Activated naive CD4-positive, alpha-beta T cell treated with anti-CD3 and anti-CD28 coated beads for 36 hours (primary cell): ENCODE measurements at regions of chr16 and their contacts with region 1.

Region 1: DNA sequence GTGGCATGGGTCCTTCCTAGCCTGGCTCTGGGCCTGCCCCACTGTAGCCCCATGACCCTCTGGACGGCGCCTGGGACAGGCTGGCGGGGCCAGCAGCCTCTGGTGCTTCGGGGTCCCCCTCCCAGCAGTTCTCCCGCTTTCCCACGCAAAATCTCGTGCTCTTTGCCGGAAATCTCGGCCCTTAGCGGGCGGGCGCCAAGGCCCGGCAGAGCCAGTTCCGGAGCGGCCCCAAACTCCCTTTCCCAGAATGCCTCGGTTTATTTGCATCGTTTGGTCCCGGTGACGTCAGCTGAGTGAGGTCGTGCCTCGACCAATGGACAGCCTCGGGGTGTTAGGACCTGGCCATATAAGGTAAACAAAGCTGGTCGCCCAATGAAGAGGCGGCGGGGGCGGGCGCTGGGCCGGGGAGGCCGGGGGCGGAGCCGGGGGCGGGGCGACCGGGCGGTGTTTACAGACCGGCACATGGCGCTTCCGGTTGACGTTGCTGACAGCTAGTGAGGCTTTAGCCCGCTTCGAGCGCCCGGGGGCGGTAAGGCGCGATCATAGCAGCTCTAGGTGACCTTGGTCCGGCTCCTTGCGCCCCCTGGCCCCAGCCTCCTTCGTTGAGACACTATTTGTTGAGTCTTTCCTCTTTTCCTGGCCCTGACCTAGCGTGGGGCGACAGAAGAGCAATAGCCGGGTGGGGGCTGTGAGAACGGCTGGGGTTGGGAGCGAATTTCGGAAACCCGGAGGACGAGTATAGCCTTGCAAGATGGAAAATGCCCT is 1.5 kb upstream of the UBALD1 start:
- DNase-seq: peak; percentile 100
- H3K4me3 Mint-ChIP-seq: peak overlapping the region; percentile 89
- H3K27ac Mint-ChIP-seq: peak overlapping the region; percentile 93
- H3K4me1 Mint-ChIP-seq: peaks cover 23% of the 10 kb centered on the region
- H3K27me3 Mint-ChIP-seq: no peaks in the 10 kb centered on the region

Region 2: GRCh38 chr16:4271176-4272066 is 344.8 kb before region 1 on chr16:
- CTCF ChIA-PET with region 1: no interaction called
- intact Hi-C with region 1: loop called (anchors 1 kb)
- DNase-seq: peak; percentile 95
- H3K4me3 Mint-ChIP-seq: peak overlapping the region; percentile 86
- H3K27ac Mint-ChIP-seq: peak overlapping the region; percentile 94
- H3K4me1 Mint-ChIP-seq: peaks cover 12% of the 10 kb centered on the region
- H3K27me3 Mint-ChIP-seq: no peaks in the 10 kb centered on the region

Region 3: GRCh38 chr16:4416200-4417032 is 199.8 kb before region 1 on chr16 and contains the start of gene CORO7:
- CTCF ChIA-PET with region 1: no interaction called
- intact Hi-C with region 1: loop called (anchors 1 kb)
- DNase-seq: peak; percentile 95
- H3K4me3 Mint-ChIP-seq: peak within 1 kb of the TSS; percentile 89
- H3K27ac Mint-ChIP-seq: peak within 1 kb of the TSS; percentile 89
- H3K4me1 Mint-ChIP-seq: peaks cover 33% of the 10 kb centered on the region
- H3K27me3 Mint-ChIP-seq: no peaks in the 10 kb centered on the region
- total RNA-seq, gene CORO7: 39.7 to 43.3 TPM

Region 4: DNA sequence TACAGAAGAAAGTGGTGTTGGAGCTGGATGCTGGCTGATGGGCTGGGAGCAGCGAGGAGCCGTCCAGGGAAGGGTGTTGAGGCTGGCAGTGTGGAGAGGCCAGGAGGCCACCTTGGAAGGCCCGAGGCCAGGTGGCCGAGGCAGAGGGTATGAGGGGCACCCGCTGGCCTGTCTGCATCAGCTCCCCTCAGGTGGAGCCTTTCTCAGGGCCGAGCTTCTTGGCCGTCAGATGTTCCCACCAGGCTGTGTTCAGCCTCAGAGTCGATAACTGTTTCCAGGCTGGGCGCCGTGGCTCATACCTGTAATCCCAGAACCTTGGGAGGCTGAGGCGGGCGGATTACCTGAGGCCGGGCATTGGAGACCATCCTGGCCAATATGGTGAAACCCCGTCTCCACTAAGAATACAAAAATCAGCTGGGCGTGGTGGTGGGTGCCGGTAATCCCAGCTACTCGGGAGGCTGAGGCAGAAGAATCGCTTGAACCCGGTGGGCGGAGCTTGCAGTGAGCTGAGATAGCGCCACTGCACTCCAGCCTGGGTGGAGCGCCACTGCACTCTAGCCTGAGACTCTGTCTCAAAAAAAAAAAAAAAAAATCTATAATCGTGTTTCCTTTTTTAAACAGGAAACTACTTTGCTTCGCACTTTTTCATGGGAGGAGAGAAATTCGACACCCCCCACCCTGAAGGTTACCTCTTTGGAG is 33.7 kb after region 1 on chr16:
- CTCF ChIA-PET with region 1: interaction called, 5 read pairs
- intact Hi-C with region 1: loop called (anchors 2 kb)
- DNase-seq: peak; percentile 34
- H3K4me3 Mint-ChIP-seq: no peak overlapping the region
- H3K27ac Mint-ChIP-seq: no peak overlapping the region
- H3K4me1 Mint-ChIP-seq: peaks cover 45% of the 10 kb centered on the region
- H3K27me3 Mint-ChIP-seq: no peaks in the 10 kb centered on the region

Region 5: GRCh38 chr16:4734063-4734729 is 118.0 kb after region 1 on chr16 and contains the starts of genes ANKS3 and DNAAF8:
- CTCF ChIA-PET with region 1: no interaction called
- intact Hi-C with region 1: loop called (anchors 1 kb)
- DNase-seq: peak; percentile 75
- H3K4me3 Mint-ChIP-seq: peak within 1 kb of the TSS; percentile 87
- H3K27ac Mint-ChIP-seq: peak within 1 kb of the TSS; percentile 46
- H3K4me1 Mint-ChIP-seq: peaks cover 16% of the 10 kb centered on the region
- H3K27me3 Mint-ChIP-seq: no peaks in the 10 kb centered on the region
- total RNA-seq, gene ANKS3: 8.2 to 11.7 TPM
- total RNA-seq, gene DNAAF8: 0.07 TPM in 1 of 2 experiments, not detected in the other

Region 6: DNA sequence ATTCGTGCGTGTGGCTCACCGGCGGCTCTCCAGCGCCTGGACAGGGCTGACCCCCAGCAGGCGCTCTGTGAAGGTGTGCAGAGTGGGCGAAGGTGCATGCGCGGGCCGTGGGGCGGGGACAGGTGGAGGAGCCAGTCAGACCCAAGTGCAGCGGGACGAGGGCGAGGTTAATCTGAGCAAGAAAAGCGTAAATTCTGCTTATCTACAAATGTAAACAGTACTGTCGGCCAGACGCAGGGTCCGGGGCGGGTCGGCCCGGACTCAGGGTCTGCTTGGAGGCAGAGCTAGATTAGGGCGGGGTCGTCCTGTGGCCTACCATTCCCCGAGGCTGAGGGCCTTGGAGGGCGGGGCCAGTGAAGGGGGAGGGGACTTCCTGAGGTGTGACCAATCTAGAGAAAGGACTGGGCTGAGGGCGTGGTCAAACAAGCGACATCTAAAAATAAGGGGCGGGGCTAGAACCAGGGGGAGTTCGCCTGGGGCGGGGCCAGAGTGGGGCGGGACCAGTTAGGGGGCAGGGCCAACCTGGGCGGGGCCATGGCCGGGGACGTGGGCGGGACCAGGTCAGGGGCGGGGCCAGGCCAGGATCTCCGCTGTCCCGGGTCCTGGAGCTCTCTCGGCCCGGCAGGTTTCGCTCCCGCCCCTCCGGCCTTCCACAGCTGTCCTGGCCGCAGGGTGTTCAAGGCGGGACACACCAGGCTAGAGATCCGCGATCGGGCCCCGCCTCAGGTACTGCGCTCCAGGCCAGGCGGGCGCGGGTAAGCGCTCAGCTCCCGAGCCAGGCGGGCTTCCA is 341.7 kb after region 1 on chr16 and contains the start of gene SEC14L5:
- CTCF ChIA-PET with region 1: interaction called, 3 read pairs
- intact Hi-C with region 1: loop called (anchors 1 kb)
- DNase-seq: peak; percentile 96
- H3K4me3 Mint-ChIP-seq: peak within 1 kb of the TSS; percentile 78
- H3K27ac Mint-ChIP-seq: no peak within 1 kb of the TSS
- H3K4me1 Mint-ChIP-seq: peaks cover 14% of the 10 kb centered on the region
- H3K27me3 Mint-ChIP-seq: peaks cover 30% of the 10 kb centered on the region
- total RNA-seq, gene SEC14L5: not detected